Common myeloid progenitor, CD34-positive (primary cell): ENCODE measurements at regions of chr2 and their contacts with region 1.

Region 1: GRCh38 chr2:201139836-201140604 is 24.1 kb downstream of the CFLAR start:
- DNase-seq: no peak
- H3K4me3 ChIP-seq: no peak overlapping the region
- H3K27ac ChIP-seq: peak overlapping the region in 1 of 2 experiments; percentile 43
- H3K4me1 ChIP-seq: peaks cover 0 to 7% (median 6%) of the 10 kb centered on the region in 4 experiments
- H3K27me3 ChIP-seq: no peaks in the 10 kb centered on the region

Region 2: GRCh38 chr2:200985799-200986198 is 154.2 kb before region 1 on chr2:
- CTCF ChIA-PET with region 1: no interaction called
- POLR2A ChIA-PET with region 1: no interaction called
- DNase-seq: no peak
- H3K4me3 ChIP-seq: no peak overlapping the region
- H3K27ac ChIP-seq: no peak overlapping the region
- H3K4me1 ChIP-seq: no peaks in the 10 kb centered on the region
- H3K27me3 ChIP-seq: no peaks in the 10 kb centered on the region

Region 3: GRCh38 chr2:201049455-201049854 is 90.6 kb before region 1 on chr2:
- CTCF ChIA-PET with region 1: no interaction called
- POLR2A ChIA-PET with region 1: no interaction called
- DNase-seq: no peak
- H3K4me3 ChIP-seq: no peak overlapping the region
- H3K27ac ChIP-seq: no peak overlapping the region
- H3K4me1 ChIP-seq: peaks cover 0 to 6% (median 0%) of the 10 kb centered on the region in 4 experiments
- H3K27me3 ChIP-seq: no peaks in the 10 kb centered on the region

Region 4: GRCh38 chr2:201118121-201118960 is 21.7 kb before region 1 on chr2:
- CTCF ChIA-PET with region 1: interaction called, 10 read pairs
- POLR2A ChIA-PET with region 1: no interaction called
- DNase-seq: peak; percentile 94 to 95 (median 94)
- H3K4me3 ChIP-seq: peak overlapping the region; percentile 88 to 100 (median 95)
- H3K27ac ChIP-seq: peak overlapping the region; percentile 93 to 97
- H3K4me1 ChIP-seq: peaks cover 33 to 69% (median 62%) of the 10 kb centered on the region in 4 experiments
- H3K27me3 ChIP-seq: no peaks in the 10 kb centered on the region

Region 5: GRCh38 chr2:201151127-201151981 is 11.3 kb after region 1 on chr2:
- CTCF ChIA-PET with region 1: interaction called, 34 read pairs
- POLR2A ChIA-PET with region 1: no interaction called
- DNase-seq: peak; percentile 42 to 86 (median 77)
- H3K4me3 ChIP-seq: no peak overlapping the region
- H3K27ac ChIP-seq: peak overlapping the region; percentile 29 to 76
- H3K4me1 ChIP-seq: peaks cover 0 to 24% (median 14%) of the 10 kb centered on the region in 4 experiments
- H3K27me3 ChIP-seq: no peaks in the 10 kb centered on the region

Region 6: GRCh38 chr2:201171259-201171814 is 31.3 kb after region 1 on chr2:
- CTCF ChIA-PET with region 1: no interaction called
- POLR2A ChIA-PET with region 1: no interaction called
- DNase-seq: no peak
- H3K4me3 ChIP-seq: no peak overlapping the region
- H3K27ac ChIP-seq: no peak overlapping the region
- H3K4me1 ChIP-seq: peaks cover 0 to 19% (median 7%) of the 10 kb centered on the region in 4 experiments
- H3K27me3 ChIP-seq: no peaks in the 10 kb centered on the region